PC-3 (cell line): ENCODE measurements at regions of chr4 and their contacts with region 1.

Region 1: GRCh38 chr4:6986781-6987587 is 56.2 kb upstream of the TADA2B start:
- DNase-seq: peak; percentile 86
- ATAC-seq: peak; percentile 69
- H3K4me3 ChIP-seq: peak overlapping the region; percentile 99
- H3K27ac ChIP-seq: peak overlapping the region; percentile 81
- H3K4me1 ChIP-seq: peaks cover 41% of the 10 kb centered on the region
- H3K27me3 ChIP-seq: no peaks in the 10 kb centered on the region
- CTCF ChIP-seq: no peak

Region 2: GRCh38 chr4:6909073-6909965 is 77.7 kb before region 1 on chr4 and contains the start of gene TBC1D14:
- CTCF ChIA-PET with region 1: no interaction called
- POLR2A ChIA-PET with region 1: interaction called, 5 read pairs
- intact Hi-C with region 1: loop called (anchors 5 kb)
- DNase-seq: peak; percentile 66
- ATAC-seq: peak; percentile 85
- H3K4me3 ChIP-seq: peak within 1 kb of the TSS; percentile 78
- H3K27ac ChIP-seq: peak within 1 kb of the TSS; percentile 77
- H3K4me1 ChIP-seq: peaks cover 8% of the 10 kb centered on the region
- H3K27me3 ChIP-seq: no peaks in the 10 kb centered on the region
- CTCF ChIP-seq: no peak
- total RNA-seq, gene TBC1D14: 33.0 and 33.3 TPM in 2 replicates

Region 3: DNA sequence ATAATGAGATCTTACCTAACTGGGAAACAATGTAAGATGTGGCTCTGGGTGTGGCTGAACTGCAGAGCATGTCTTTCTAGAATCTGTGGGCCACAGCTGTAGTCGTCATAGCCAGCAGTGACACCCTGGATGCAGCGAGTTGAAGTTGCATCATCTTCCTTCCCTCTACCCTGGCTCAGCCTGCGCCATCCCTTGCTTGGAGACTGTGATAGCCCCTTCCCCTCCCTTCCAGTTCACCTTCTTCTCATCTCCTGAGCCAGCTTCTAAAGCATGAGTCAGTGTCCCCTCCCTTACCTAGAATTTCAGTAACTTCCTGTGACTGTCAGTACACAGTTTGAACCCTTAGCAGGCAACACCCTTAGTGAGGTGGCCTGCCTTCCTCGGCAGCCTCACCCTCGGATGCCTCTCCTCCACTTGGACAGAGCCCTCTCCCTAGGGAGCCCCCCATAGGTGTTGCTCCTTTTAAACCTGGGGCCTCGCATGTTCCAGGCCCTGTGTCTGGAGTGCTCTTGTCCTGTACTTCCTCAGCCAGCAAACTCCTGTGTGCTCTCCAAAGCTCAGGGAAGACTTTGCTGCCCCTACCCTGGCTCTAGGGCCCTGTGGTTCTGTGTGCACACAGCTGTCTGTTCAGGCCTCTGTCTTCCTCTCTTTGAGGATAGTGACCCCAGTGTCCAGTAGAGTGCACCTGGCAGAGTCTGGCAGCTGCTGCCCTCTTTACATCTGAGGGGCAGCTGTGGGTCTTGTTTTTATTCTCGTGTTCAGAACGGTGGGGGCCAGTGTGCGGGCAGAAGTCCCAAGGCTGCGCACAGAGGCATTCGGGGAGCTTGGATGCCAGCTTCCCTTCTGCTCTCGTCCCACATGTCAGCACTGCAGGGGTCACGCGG is 12.4 kb after region 1 on chr4:
- CTCF ChIA-PET with region 1: no interaction called
- POLR2A ChIA-PET with region 1: interaction called, 13 read pairs
- intact Hi-C with region 1: no loop called
- DNase-seq: peak; percentile 83
- ATAC-seq: peak; percentile 96
- H3K4me3 ChIP-seq: 0 out of 2 replicates have a peak overlapping the region, but pooled peaks have one; percentile 30
- H3K27ac ChIP-seq: peak overlapping the region; percentile 92
- H3K4me1 ChIP-seq: peaks cover 21% of the 10 kb centered on the region
- H3K27me3 ChIP-seq: no peaks in the 10 kb centered on the region
- CTCF ChIP-seq: no peak

Region 4: GRCh38 chr4:7042697-7043464 is 55.9 kb after region 1 on chr4 and contains the start of gene TADA2B:
- CTCF ChIA-PET with region 1: interaction called, 3 read pairs
- POLR2A ChIA-PET with region 1: interaction called, 5 read pairs
- intact Hi-C with region 1: loop called (anchors 2 kb)
- DNase-seq: peak; percentile 95
- ATAC-seq: peak; percentile 82
- H3K4me3 ChIP-seq: peak within 1 kb of the TSS; percentile 98
- H3K27ac ChIP-seq: peak within 1 kb of the TSS; percentile 18; the same call in 1 of the 2 replicates
- H3K4me1 ChIP-seq: peaks cover 33% of the 10 kb centered on the region
- H3K27me3 ChIP-seq: no peaks in the 10 kb centered on the region
- CTCF ChIP-seq: no peak
- total RNA-seq, gene TADA2B: 14.7 and 16.5 TPM in 2 replicates